ENCODE measurements at regions of chr15 and their contacts with region 1.

Region 1: GRCh38 chr15:90013503-90013937 is 12.4 kb downstream of the ZNF710 start:
- DNase-seq: no peak
- H3K4me3 Mint-ChIP-seq: no peak overlapping the region
- H3K27ac Mint-ChIP-seq: peak overlapping the region; percentile 43
- H3K4me1 Mint-ChIP-seq: peaks cover 34% of the 10 kb centered on the region
- H3K27me3 Mint-ChIP-seq: no peaks in the 10 kb centered on the region
- CTCF ChIP-seq: no peak

Region 2: DNA sequence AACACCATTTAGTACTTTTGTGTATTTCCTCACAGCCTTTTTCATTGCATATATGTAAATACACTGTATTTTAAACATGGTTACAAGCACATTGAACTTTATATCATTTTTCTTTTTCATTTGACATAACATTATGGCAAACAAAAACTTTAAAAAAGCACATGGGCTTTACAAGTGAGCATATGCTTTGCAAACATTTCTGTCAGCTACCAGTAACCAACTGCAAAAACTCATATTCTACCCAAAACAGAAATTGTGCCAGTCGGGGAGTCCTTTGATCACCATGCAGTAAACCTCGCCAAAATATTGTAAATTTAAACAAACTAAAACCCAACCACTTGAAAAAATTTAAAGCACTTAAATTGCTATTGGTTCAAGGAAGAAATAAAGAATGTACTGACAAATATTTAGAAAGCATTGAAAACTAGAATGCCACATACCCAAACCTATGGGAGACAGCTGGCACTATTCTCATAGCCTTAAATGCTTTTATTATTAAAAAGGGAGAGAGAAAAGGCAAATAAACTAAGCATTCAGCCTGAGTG is 12.0 kb after region 1 on chr15:
- CTCF ChIA-PET with region 1: interaction called, 4 read pairs
- POLR2A ChIA-PET with region 1: interaction called, 14 read pairs
- intact Hi-C with region 1: no loop called
- DNase-seq: no peak
- H3K4me3 Mint-ChIP-seq: no peak overlapping the region
- H3K27ac Mint-ChIP-seq: no peak overlapping the region
- H3K4me1 Mint-ChIP-seq: no peaks in the 10 kb centered on the region
- H3K27me3 Mint-ChIP-seq: no peaks in the 10 kb centered on the region
- CTCF ChIP-seq: no peak

Region 3: DNA sequence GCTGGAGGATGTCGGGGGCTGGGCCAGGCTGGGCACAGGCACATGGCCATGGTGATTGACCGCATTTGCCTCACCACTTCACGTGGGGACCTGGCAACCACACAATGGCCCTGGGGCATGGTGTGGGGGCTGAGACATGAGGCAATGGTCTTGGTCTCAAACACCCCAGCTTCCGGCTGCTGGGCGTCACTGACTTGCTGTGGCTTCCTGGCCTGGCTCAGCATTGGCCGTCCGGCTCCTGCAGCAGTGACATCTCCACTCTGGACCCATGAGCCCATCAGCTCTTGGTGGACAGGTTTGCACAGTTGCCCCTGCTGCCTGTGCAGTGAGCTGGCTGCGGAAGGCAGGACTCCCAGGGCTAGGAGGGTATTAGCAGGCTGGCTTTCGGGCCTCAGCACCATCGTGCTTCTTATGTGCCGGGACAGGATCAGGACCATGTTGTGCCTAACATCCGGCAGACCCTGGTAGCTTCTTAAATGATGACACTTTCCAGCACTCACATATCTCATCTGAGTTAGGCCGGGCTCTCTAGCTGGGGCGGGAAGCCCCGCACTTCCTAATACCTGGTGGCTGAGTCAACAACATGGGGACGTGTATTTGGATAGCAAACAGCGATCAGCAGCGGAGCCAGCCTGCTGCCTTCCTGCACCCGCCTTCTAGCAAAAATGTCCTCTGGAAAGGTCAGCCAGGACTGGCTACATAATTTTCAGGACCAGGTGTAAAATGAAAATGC is 21.7 kb after region 1 on chr15:
- CTCF ChIA-PET with region 1: interaction called, 5 read pairs
- POLR2A ChIA-PET with region 1: interaction called, 22 read pairs
- intact Hi-C with region 1: no loop called
- DNase-seq: peak; percentile 88
- H3K4me3 Mint-ChIP-seq: peak overlapping the region; percentile 25
- H3K27ac Mint-ChIP-seq: peak overlapping the region; percentile 37
- H3K4me1 Mint-ChIP-seq: peaks cover 51% of the 10 kb centered on the region
- H3K27me3 Mint-ChIP-seq: no peaks in the 10 kb centered on the region
- CTCF ChIP-seq: no peak

Measured in MCF 10A (cell line).